Naive thymus-derived CD4-positive, alpha-beta T cell (primary cell): ENCODE measurements at regions of chr5 and their contacts with region 1.

Region 1: DNA sequence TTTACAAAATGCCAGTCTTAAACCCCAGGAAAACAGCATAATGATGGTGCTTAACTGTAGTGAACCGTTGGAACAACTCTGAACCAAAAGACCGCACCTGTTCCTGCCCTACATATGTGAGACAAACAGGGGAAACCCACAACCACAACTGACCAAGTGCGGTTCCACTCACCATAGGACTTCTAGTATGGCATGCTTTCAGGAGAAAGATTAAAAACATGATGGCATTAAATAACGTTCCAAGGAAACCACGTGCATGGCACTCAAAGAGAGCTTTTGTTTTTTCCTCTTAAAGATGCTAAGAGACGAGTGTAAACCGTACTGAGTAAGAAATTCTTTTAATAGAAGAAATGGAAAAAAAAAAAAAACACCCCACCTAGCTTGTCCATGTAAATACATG is 119.8 kb downstream of the SSBP2 start:
- DNase-seq: peak in 7 of 9 donors; percentile 19 to 52 (median 29)
- ATAC-seq: peak; percentile 76
- H3K4me3 ChIP-seq: no peak overlapping the region
- H3K4me3 Mint-ChIP-seq: peak overlapping the region in 2 of 10 donors; percentile 33 to 34
- H3K27ac ChIP-seq: no peak overlapping the region
- H3K27ac Mint-ChIP-seq: peak overlapping the region in 3 of 9 donors; percentile 8 to 37 (median 16)
- H3K4me1 ChIP-seq: peaks cover 5 to 23% of the 10 kb centered on the region in 2 donors
- H3K4me1 Mint-ChIP-seq: peaks cover 1 to 16% (median 7%) of the 10 kb centered on the region in 7 donors
- H3K27me3 ChIP-seq: no peaks in the 10 kb centered on the region
- H3K27me3 Mint-ChIP-seq: no peaks in the 10 kb centered on the region

Region 2: GRCh38 chr5:81579262-81579924 is 51.7 kb before region 1 on chr5:
- CTCF ChIA-PET with region 1: no interaction called
- POLR2A ChIA-PET with region 1: no interaction called
- intact Hi-C with region 1: loop called in 1 of 2 experiments (anchors 10 kb)
- DNase-seq: no peak
- ATAC-seq: peak; percentile 71
- H3K4me3 ChIP-seq: no peak overlapping the region
- H3K4me3 Mint-ChIP-seq: peak overlapping the region in 3 of 10 donors; percentile 7 to 14 (median 8)
- H3K27ac ChIP-seq: no peak overlapping the region
- H3K27ac Mint-ChIP-seq: peak overlapping the region in 5 of 9 donors; percentile 1 to 41 (median 4)
- H3K4me1 ChIP-seq: no peaks in the 10 kb centered on the region
- H3K4me1 Mint-ChIP-seq: peaks cover 8 to 68% (median 19%) of the 10 kb centered on the region in 7 donors
- H3K27me3 ChIP-seq: no peaks in the 10 kb centered on the region
- H3K27me3 Mint-ChIP-seq: no peaks in the 10 kb centered on the region

Region 3: GRCh38 chr5:81609810-81610375 is 21.2 kb before region 1 on chr5:
- CTCF ChIA-PET with region 1: no interaction called
- POLR2A ChIA-PET with region 1: no interaction called
- intact Hi-C with region 1: no loop called
- DNase-seq: no peak
- ATAC-seq: no peak
- H3K4me3 ChIP-seq: no peak overlapping the region
- H3K4me3 Mint-ChIP-seq: peak overlapping the region in 1 of 10 donors; percentile 23
- H3K27ac ChIP-seq: no peak overlapping the region
- H3K27ac Mint-ChIP-seq: peak overlapping the region in 1 of 9 donors; percentile 58
- H3K4me1 ChIP-seq: no peaks in the 10 kb centered on the region
- H3K4me1 Mint-ChIP-seq: peaks cover 0 to 45% (median 32%) of the 10 kb centered on the region in 7 donors
- H3K27me3 ChIP-seq: no peaks in the 10 kb centered on the region
- H3K27me3 Mint-ChIP-seq: no peaks in the 10 kb centered on the region